Calu3 (cell line): ENCODE measurements at regions of chrX and their contacts with region 1.

Region 1: DNA sequence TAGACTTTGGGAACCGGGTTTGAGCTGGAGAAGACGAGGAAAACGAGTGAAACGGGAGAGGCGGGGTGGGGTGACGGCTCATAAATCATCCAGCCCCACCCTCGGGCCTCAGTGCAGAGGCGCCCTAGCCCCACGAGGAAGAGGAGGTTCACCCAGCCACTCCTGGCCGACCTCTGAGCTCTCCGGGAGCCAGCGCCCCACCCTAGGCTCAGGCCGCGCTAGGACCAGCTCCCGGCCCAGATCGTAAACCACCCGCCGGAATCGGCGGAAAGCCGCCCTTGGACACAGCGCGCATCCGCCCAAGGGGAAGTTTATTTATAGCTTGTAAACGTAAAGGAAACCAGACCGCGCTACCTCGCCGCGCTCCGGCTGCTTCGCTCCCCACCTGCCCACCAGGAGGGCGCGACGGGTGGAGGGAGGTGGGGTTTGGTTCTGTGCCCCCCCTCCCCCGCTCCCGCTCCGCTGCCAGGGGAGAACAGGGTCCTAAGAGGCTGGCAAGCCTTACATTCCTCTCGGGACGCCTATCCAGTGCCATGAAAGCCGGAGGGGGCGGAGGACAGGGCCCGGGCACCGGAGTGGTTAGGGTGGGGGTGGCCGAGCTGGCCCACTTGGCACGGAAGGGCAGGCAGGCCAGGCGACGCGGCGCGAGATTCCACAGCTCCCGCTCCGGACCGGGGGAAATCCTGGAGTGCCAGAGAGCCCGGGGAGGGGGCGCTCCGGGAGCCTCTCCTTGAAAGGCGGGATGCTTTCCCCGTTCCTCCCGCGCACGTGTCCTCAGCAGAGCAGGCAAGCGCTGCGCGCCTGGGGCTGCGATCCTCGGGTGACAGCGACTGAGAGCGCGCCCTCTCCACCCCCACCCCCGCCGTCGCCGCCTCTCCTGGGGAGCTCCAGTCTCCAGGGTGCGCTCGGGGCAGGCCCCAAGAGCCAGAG is 84.2 kb downstream of the BCOR start:
- DNase-seq: peak; percentile 62
- H3K4me3 Mint-ChIP-seq: peak overlapping the region; percentile 84
- H3K27ac Mint-ChIP-seq: peak overlapping the region; percentile 64
- H3K4me1 Mint-ChIP-seq: no peaks in the 10 kb centered on the region
- H3K27me3 Mint-ChIP-seq: no peaks in the 10 kb centered on the region
- CTCF ChIP-seq: no peak

Region 2: GRCh38 chrX:39619182-39620009 is 394.1 kb before region 1 on chrX:
- CTCF ChIA-PET with region 1: no interaction called
- intact Hi-C with region 1: no loop called
- DNase-seq: peak; percentile 56
- H3K4me3 Mint-ChIP-seq: no peak overlapping the region
- H3K27ac Mint-ChIP-seq: no peak overlapping the region
- H3K4me1 Mint-ChIP-seq: peaks cover 27% of the 10 kb centered on the region
- H3K27me3 Mint-ChIP-seq: peaks cover 19% of the 10 kb centered on the region
- CTCF ChIP-seq: no peak

Region 3: DNA sequence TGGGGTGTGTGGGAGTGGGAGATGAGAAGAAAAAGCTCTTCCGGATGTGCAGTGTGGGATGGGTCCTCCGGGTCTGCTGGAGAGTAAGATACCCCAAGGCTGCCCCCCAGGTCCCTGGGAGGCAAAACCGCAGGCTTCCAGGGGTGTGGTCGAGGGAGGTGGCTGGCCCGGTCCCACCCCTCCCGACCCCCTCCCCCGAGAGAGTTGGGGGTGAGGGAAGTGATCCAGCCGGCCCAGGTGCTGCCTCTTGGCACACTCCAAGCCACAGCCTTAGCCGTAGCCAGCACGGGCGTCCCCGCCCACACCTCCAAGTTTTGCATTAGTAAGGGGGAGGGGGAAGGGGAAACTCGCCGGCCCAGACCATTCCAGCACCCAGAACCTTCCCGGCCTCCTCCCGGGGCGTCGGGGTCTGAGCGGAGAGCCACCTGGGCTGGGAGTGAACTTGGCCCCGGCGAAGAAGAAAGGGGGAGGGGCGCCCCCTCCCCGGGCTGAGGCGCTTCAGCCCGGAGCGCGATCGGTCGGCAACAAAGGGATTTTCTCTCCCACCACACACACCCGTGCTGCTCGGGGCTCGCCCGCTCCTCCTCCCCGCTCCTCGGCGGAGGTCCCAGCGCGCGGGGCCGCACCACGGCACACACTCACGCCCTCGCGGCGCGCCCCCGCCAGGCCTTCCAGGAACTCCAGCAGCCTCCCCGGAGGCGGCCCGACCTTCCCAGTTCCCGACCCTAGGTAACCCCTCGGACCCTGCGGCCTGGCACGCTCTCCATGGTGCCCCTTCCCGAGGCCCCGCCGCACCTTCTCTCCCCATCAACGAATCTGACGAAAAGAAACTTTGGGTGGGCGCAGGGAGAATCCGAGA is 69.8 kb after region 1 on chrX:
- CTCF ChIA-PET with region 1: no interaction called
- intact Hi-C with region 1: loop called (anchors 10 kb)
- DNase-seq: peak; percentile 30
- H3K4me3 Mint-ChIP-seq: peak overlapping the region; percentile 58
- H3K27ac Mint-ChIP-seq: no peak overlapping the region
- H3K4me1 Mint-ChIP-seq: no peaks in the 10 kb centered on the region
- H3K27me3 Mint-ChIP-seq: no peaks in the 10 kb centered on the region
- CTCF ChIP-seq: no peak

Region 4: DNA sequence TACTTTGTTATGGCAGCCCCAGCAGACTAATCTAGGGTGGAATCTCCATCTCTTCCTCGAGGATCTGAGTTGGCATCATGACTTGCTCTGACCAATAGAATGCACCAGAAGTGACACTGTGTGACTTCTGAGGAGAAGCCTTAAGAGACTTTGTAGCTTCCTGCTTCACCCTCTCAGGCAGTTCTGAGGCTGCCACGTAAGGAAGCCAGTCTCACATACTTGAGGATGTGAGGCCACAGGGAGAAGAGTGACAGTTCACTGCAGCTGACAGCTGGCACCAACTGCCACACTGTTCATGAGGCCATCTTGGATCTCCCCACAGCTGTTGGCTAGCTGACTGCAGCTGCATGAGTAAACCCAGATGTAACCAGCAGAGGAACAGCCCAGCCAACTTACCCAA is 113.5 kb after region 1 on chrX:
- CTCF ChIA-PET with region 1: no interaction called
- intact Hi-C with region 1: no loop called
- DNase-seq: no peak
- H3K4me3 Mint-ChIP-seq: no peak overlapping the region
- H3K27ac Mint-ChIP-seq: no peak overlapping the region
- H3K4me1 Mint-ChIP-seq: peaks cover 15% of the 10 kb centered on the region
- H3K27me3 Mint-ChIP-seq: no peaks in the 10 kb centered on the region
- CTCF ChIP-seq: no peak

Region 5: GRCh38 chrX:40227125-40227524 is 213.6 kb after region 1 on chrX:
- CTCF ChIA-PET with region 1: no interaction called
- intact Hi-C with region 1: no loop called
- DNase-seq: no peak
- H3K4me3 Mint-ChIP-seq: no peak overlapping the region
- H3K27ac Mint-ChIP-seq: no peak overlapping the region
- H3K4me1 Mint-ChIP-seq: no peaks in the 10 kb centered on the region
- H3K27me3 Mint-ChIP-seq: no peaks in the 10 kb centered on the region
- CTCF ChIP-seq: no peak

Region 6: GRCh38 chrX:40420899-40421729 is 407.6 kb after region 1 on chrX:
- CTCF ChIA-PET with region 1: no interaction called
- intact Hi-C with region 1: no loop called
- DNase-seq: peak; percentile 13
- H3K4me3 Mint-ChIP-seq: no peak overlapping the region
- H3K27ac Mint-ChIP-seq: no peak overlapping the region
- H3K4me1 Mint-ChIP-seq: no peaks in the 10 kb centered on the region
- H3K27me3 Mint-ChIP-seq: no peaks in the 10 kb centered on the region
- CTCF ChIP-seq: no peak